Prostate gland (tissue), 2 donors: ENCODE measurements at regions of chr3 and their contacts with region 1.

Region 1: DNA sequence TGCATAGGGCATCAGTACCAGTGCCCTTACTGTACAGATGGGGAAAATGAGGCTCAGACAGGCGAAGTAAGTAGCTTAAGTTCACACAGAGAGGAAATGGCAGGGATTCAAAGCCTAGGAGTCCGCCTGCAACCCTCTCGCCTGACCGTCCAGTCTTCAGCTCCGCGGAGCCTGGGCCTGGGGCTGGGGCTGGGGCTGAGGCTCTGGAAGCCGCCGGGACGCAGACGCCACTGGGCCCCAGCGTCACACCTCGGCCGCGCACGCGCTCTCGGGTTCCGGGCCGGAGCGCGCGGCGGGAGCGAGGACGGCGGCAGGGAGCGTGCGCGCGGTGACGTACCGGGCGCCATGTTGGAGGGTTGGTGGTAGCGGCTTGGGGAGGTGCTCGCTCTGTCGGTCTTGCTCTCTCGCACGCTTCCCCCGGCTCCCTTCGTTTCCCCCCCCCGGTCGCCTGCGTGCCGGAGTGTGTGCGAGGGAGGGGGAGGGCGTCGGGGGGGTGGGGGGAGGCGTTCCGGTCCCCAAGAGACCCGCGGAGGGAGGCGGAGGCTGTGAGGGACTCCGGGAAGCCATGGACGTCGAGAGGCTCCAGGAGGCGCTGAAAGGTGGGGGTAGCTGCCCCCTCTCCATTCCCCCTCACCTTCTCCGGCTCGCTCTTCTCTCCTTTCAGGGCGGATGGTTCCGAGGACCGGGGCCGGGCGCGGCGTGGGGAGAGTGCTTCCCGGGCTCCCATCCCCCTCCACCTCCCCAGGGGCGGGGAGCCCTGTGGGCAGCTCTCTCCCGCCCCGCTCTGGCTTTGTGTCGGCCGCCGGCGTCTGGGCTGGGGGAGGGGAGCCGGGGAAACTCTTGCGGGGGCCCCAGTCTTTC is at the start of gene PPP4R2:
- DNase-seq: peak; percentile 80
- H3K4me3 ChIP-seq: peak within 1 kb of the TSS; percentile 73 to 94
- H3K27ac ChIP-seq: peak within 1 kb of the TSS; percentile 98
- H3K4me1 ChIP-seq: peaks cover 4% of the 10 kb centered on the region
- H3K27me3 ChIP-seq: no peaks in the 10 kb centered on the region
- CTCF ChIP-seq: peak in 2 of 4 experiments; percentile 6 to 31
- POLR2A ChIP-seq: peak; percentile 84
- total RNA-seq, gene PPP4R2: 29.6 to 41.8 TPM

Region 2: GRCh38 chr3:72847751-72848702 is 148.7 kb before region 1 on chr3 and contains the start of gene SHQ1:
- intact Hi-C with region 1: loop called (anchors 5 kb)
- DNase-seq: peak; percentile 94
- H3K4me3 ChIP-seq: peak within 1 kb of the TSS; percentile 72 to 77
- H3K27ac ChIP-seq: peak within 1 kb of the TSS; percentile 67 to 70
- H3K4me1 ChIP-seq: peaks cover 2% of the 10 kb centered on the region
- H3K27me3 ChIP-seq: no peaks in the 10 kb centered on the region
- CTCF ChIP-seq: no peak
- POLR2A ChIP-seq: peak; percentile 38
- total RNA-seq, gene SHQ1: 12.9 to 31.9 TPM

Region 3: DNA sequence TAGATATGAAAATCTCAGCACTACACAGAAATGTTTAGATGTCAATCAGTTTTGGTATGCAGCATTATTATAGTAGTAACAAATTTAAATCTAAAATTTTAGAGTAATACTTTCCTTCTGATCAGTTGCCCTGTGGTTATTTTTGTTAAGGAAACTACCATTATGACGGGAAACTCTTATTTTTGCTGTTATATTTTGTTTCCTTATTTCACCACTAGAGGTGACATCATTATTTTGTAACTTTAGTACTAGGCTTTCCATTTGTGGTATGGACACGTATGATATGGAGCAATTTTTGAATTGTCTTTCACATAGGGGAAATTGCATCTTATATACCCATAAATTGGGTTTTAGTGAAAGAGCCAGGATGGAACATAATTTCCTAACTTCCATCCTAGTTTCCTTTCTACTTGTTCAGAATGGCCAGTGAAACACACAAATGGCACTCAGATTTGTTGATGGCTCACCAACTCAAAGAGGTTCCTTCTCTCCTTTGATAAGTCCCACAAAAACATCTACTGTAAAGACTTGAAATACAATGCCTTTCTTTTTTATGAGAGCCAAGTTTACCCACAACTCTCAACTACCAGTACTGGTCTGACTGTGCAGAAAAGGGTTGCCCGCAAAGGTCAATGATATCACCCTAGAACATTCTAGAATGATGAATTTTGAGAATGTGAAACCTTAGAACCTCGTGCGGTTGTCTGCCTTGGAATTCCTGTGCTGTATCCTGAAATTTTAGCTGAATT is 19.5 kb before region 1 on chr3:
- intact Hi-C with region 1: no loop called
- DNase-seq: no peak
- H3K4me3 ChIP-seq: no peak overlapping the region
- H3K27ac ChIP-seq: no peak overlapping the region
- H3K4me1 ChIP-seq: no peaks in the 10 kb centered on the region
- H3K27me3 ChIP-seq: no peaks in the 10 kb centered on the region
- CTCF ChIP-seq: no peak
- POLR2A ChIP-seq: no peak